ENCODE measurements at regions of chr2 and their contacts with region 1.

Region 1: GRCh38 chr2:226791487-226792081 is 8.0 kb downstream of the IRS1 start:
- DNase-seq: peak; percentile 87
- ATAC-seq: peak; percentile 66
- H3K4me3 ChIP-seq: peak overlapping the region; percentile 88
- H3K27ac ChIP-seq: peak overlapping the region; percentile 88
- H3K4me1 ChIP-seq: peaks cover 39% of the 10 kb centered on the region
- H3K27me3 ChIP-seq: no peaks in the 10 kb centered on the region
- CTCF ChIP-seq: peak; percentile 18; the same call in 1 of the 2 replicates

Region 2: GRCh38 chr2:225797394-225797793 is 994.2 kb before region 1 on chr2:
- CTCF ChIA-PET with region 1: no interaction called
- POLR2A ChIA-PET with region 1: no interaction called
- intact Hi-C with region 1: loop called (anchors 10 kb)
- DNase-seq: no peak
- ATAC-seq: no peak
- H3K4me3 ChIP-seq: no peak overlapping the region
- H3K27ac ChIP-seq: no peak overlapping the region
- H3K4me1 ChIP-seq: no peaks in the 10 kb centered on the region
- H3K27me3 ChIP-seq: no peaks in the 10 kb centered on the region
- CTCF ChIP-seq: 0 out of 2 replicates have a peak, but pooled peaks have one; percentile 22

Region 3: DNA sequence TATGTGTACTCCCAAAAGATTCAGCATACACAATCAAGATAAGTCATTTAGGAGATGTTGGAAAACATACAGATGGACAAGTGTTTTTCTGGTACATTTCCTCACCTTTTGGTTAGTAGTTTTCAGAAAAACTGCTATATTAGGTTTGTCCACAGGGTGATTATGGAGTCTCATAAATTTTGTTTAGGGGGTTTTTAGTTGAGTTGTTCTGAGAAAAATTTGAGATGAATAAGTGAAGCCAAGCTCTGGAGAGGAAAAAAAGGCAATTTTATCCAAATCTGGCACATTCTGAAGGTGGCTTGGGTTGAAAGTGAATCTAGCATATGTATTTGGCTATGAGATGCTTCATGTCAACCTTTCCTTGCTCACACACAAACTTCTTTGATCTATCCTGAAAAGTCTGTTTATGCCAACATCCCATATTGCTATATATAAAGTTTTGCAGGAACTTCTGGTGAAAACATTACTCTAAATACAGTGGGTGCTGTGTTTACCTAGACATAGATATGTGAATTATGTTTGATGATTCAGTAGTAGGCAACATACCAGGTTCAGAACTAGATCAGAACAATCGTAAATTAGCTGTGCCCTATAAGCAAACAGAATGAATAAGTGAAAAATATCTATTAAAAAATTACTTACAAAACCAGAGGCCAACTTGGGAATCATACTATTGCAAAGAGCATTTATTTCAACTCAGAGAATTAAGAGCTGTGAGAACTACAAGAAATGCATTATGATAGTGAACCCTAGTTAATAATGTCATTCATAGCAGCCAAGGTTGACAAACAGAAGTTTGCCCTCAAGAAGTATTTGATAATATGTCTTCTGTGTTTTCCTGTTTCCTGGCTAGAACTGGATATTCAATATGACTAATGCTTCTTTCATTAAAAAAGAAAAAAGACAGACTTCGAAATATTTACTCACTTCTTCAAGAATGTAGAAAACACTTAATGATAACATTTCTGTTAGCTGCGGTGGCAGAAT is 544.0 kb before region 1 on chr2:
- CTCF ChIA-PET with region 1: no interaction called
- POLR2A ChIA-PET with region 1: no interaction called
- intact Hi-C with region 1: loop called (anchors 2 kb)
- DNase-seq: peak; percentile 76
- ATAC-seq: peak; percentile 92
- H3K4me3 ChIP-seq: peak overlapping the region; percentile 33; the same call in 1 of the 2 replicates
- H3K27ac ChIP-seq: peak overlapping the region; percentile 78
- H3K4me1 ChIP-seq: peaks cover 27% of the 10 kb centered on the region
- H3K27me3 ChIP-seq: no peaks in the 10 kb centered on the region
- CTCF ChIP-seq: peak; percentile 29; the same call in 1 of the 2 replicates

Region 4: GRCh38 chr2:226478109-226478809 is 313.3 kb before region 1 on chr2:
- CTCF ChIA-PET with region 1: no interaction called
- POLR2A ChIA-PET with region 1: no interaction called
- intact Hi-C with region 1: loop called (anchors 5 kb)
- DNase-seq: peak; percentile 52
- ATAC-seq: peak; percentile 59
- H3K4me3 ChIP-seq: no peak overlapping the region
- H3K27ac ChIP-seq: no peak overlapping the region
- H3K4me1 ChIP-seq: peaks cover 27% of the 10 kb centered on the region
- H3K27me3 ChIP-seq: no peaks in the 10 kb centered on the region
- CTCF ChIP-seq: no peak

Region 5: DNA sequence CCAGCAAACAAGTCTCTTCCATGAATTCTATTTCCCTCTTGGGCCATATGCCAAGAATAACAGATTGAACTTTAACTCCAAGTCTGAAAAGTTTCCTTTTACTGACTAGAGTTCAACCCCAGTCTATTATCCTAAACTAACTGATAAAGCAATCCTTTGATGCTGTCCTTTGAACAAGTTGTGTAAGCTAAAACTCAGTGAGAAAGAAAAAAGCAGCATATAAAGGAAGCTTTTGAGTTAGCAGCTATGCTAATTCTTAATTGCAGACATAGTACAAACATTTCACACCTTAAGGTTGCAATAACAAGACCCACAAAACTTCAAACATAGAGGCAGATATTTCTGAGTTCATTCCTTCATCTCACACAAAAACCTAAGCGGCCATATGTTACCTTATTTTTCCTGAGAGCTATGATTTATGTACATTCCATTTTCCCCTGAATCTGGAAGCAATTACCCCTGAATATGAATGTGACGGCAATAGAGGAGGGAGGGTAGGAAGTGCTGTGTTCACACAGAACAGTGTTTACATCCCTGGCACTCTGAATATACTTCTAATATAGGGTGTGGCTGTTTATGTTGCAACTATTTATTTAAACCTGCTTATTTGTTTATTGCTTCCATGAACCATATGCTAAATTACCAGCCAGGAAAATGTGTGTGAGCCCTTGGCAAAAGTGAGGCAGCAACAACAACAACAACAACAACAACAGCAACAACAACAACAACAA is 172.5 kb before region 1 on chr2:
- CTCF ChIA-PET with region 1: no interaction called
- POLR2A ChIA-PET with region 1: interaction called, 5 read pairs
- intact Hi-C with region 1: loop called (anchors 10 kb)
- DNase-seq: no peak
- ATAC-seq: no peak
- H3K4me3 ChIP-seq: no peak overlapping the region
- H3K27ac ChIP-seq: no peak overlapping the region
- H3K4me1 ChIP-seq: peaks cover 10% of the 10 kb centered on the region
- H3K27me3 ChIP-seq: no peaks in the 10 kb centered on the region
- CTCF ChIP-seq: no peak

Region 6: DNA sequence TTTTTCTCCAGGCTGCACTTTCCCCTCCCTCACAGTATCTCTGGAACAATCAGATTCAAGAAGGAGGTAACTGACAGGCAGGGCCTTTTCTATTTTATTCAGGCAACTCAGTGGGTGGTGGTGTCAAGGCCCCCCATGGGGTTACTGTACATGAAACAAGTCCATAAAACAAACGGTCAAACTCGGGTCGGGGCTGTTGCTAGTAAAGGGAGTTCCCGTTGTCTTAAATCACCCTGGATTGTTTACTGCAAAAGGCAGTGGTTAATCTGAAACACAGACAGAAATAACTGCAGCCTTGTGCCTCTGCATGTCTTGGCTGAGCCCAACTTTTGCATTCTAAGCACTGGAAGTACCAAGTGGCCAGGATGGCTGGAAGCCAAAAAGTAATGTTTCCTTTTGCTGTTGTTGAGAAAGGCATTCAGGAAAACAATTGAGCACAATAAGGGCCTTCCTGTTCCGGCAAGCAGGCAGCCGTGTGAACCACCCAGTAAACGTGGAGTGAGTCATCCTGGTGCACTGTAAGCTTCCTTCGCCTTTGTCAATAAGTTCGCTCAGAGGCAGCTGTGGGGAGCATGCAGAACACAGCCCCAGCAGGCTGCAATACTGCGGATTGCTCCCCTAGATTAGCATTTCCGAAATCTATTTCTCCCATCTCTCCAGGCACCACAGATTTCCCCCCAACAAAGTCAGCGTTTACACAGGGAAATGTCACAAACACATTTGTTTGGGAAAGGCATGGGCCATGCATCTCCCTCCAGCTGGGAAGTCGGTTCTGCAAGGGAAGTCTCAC is 141.5 kb before region 1 on chr2:
- CTCF ChIA-PET with region 1: no interaction called
- POLR2A ChIA-PET with region 1: interaction called, 5 read pairs
- intact Hi-C with region 1: loop called (anchors 2 kb)
- DNase-seq: peak; percentile 98
- ATAC-seq: peak; percentile 91
- H3K4me3 ChIP-seq: no peak overlapping the region
- H3K27ac ChIP-seq: peak overlapping the region; percentile 97
- H3K4me1 ChIP-seq: peaks cover 43% of the 10 kb centered on the region
- H3K27me3 ChIP-seq: no peaks in the 10 kb centered on the region
- CTCF ChIP-seq: no peak

Region 7: DNA sequence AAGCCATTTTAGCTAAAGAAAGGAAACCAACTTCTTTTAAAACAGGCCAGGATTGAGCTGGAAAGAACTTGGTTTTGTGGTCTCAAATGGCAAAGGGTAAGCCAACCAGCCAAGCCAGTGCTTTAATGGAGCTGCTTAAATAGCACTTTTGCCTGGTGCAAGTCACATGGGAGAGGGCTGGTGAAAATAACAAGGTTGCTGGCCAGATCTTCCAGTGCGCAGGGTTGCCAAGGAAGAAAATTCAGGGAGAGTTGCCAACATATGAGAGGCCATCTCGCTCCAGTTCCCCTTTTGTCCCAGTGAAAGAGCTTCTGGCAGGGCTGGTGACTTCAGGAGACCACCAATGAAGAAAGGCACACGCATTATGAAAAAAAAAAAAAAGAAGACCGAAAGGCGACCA is 49.2 kb before region 1 on chr2:
- CTCF ChIA-PET with region 1: no interaction called
- POLR2A ChIA-PET with region 1: no interaction called
- intact Hi-C with region 1: loop called (anchors 5 kb)
- DNase-seq: no peak
- ATAC-seq: no peak
- H3K4me3 ChIP-seq: no peak overlapping the region
- H3K27ac ChIP-seq: no peak overlapping the region
- H3K4me1 ChIP-seq: no peaks in the 10 kb centered on the region
- H3K27me3 ChIP-seq: no peaks in the 10 kb centered on the region
- CTCF ChIP-seq: no peak